Activated CD4-positive, alpha-beta T cell treated with anti-CD3 and anti-CD28 coated beads, Interleukin-2, amount 10 ng/mL, durations not matched to agents 24 days and 14 days (primary cell): ENCODE measurements at regions of chr9 and their contacts with region 1.

Region 1: GRCh38 chr9:124218438-124218982 is 39.2 kb upstream of the NEK6 start:
- DNase-seq: peak; percentile 79
- H3K4me3 Mint-ChIP-seq: peak overlapping the region; percentile 22
- H3K27ac Mint-ChIP-seq: peak overlapping the region; percentile 78
- H3K4me1 Mint-ChIP-seq: peaks cover 63% of the 10 kb centered on the region
- H3K27me3 Mint-ChIP-seq: peaks cover 2% of the 10 kb centered on the region

Region 2: GRCh38 chr9:124180557-124180956 is 38.0 kb before region 1 on chr9:
- intact Hi-C with region 1: no loop called
- DNase-seq: no peak
- H3K4me3 Mint-ChIP-seq: no peak overlapping the region
- H3K27ac Mint-ChIP-seq: no peak overlapping the region
- H3K4me1 Mint-ChIP-seq: no peaks in the 10 kb centered on the region
- H3K27me3 Mint-ChIP-seq: peaks cover 25% of the 10 kb centered on the region

Region 3: GRCh38 chr9:124202447-124202971 is 16.0 kb before region 1 on chr9:
- intact Hi-C with region 1: loop called (anchors 1 kb)
- DNase-seq: peak; percentile 91
- H3K4me3 Mint-ChIP-seq: peak overlapping the region; percentile 75
- H3K27ac Mint-ChIP-seq: peak overlapping the region; percentile 94
- H3K4me1 Mint-ChIP-seq: peaks cover 65% of the 10 kb centered on the region
- H3K27me3 Mint-ChIP-seq: no peaks in the 10 kb centered on the region

Region 4: GRCh38 chr9:124239249-124240073 is 21.0 kb after region 1 on chr9:
- intact Hi-C with region 1: loop called (anchors 2 kb)
- DNase-seq: no peak
- H3K4me3 Mint-ChIP-seq: peak overlapping the region; percentile 60
- H3K27ac Mint-ChIP-seq: peak overlapping the region; percentile 66
- H3K4me1 Mint-ChIP-seq: peaks cover 39% of the 10 kb centered on the region
- H3K27me3 Mint-ChIP-seq: peaks cover 12% of the 10 kb centered on the region

Region 5: DNA sequence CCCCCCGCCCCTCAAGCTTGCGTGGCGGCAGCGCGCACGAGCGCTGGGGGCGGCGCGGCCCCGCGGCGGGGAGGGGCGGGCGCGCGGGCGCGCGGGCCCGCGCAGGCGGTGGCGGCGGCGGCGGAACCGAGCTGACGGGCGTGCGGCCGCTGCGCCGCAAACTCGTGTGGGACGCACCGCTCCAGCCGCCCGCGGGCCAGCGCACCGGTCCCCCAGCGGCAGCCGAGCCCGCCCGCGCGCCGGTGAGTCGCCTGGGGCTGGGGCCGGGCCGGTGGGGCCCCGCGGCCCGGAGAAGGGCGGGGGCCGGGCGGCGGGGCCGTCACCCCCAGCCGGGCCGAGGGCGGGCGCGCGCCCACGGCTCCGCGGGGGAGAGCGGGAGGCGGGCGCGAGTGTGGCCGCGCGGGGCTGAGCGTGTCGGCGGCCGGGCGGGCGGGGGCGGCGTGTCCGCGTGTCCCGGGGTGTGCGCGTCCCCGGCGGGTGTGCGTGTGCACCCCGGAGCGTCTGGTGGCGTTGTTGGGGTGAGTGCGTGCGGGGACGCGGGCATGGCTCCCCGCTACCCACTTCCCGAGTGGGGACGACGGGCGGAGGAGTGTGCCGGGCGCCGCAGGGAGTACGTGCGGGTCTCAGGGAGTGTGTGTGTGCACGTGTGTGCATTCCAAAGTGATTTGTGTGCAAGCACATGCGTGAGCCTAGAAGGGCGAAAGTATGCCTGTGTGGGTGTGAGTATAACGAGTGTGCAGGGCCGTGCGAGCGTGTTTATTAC is 39.5 kb after region 1 on chr9 and contains the start of gene NEK6:
- intact Hi-C with region 1: no loop called
- DNase-seq: peak; percentile 77
- H3K4me3 Mint-ChIP-seq: peak within 1 kb of the TSS; percentile 94
- H3K27ac Mint-ChIP-seq: peak within 1 kb of the TSS; percentile 93
- H3K4me1 Mint-ChIP-seq: peaks cover 58% of the 10 kb centered on the region
- H3K27me3 Mint-ChIP-seq: peaks cover 47% of the 10 kb centered on the region
- total RNA-seq, gene NEK6: 26.4 and 32.5 TPM in 2 replicates

Region 6: GRCh38 chr9:124285903-124286291 is 67.4 kb after region 1 on chr9:
- intact Hi-C with region 1: loop called (anchors 2 kb)
- DNase-seq: peak; percentile 73
- H3K4me3 Mint-ChIP-seq: peak overlapping the region; percentile 83
- H3K27ac Mint-ChIP-seq: peak overlapping the region; percentile 85
- H3K4me1 Mint-ChIP-seq: peaks cover 26% of the 10 kb centered on the region
- H3K27me3 Mint-ChIP-seq: no peaks in the 10 kb centered on the region